ENCODE measurements at regions of chr9 and their contacts with region 1.

Region 1: DNA sequence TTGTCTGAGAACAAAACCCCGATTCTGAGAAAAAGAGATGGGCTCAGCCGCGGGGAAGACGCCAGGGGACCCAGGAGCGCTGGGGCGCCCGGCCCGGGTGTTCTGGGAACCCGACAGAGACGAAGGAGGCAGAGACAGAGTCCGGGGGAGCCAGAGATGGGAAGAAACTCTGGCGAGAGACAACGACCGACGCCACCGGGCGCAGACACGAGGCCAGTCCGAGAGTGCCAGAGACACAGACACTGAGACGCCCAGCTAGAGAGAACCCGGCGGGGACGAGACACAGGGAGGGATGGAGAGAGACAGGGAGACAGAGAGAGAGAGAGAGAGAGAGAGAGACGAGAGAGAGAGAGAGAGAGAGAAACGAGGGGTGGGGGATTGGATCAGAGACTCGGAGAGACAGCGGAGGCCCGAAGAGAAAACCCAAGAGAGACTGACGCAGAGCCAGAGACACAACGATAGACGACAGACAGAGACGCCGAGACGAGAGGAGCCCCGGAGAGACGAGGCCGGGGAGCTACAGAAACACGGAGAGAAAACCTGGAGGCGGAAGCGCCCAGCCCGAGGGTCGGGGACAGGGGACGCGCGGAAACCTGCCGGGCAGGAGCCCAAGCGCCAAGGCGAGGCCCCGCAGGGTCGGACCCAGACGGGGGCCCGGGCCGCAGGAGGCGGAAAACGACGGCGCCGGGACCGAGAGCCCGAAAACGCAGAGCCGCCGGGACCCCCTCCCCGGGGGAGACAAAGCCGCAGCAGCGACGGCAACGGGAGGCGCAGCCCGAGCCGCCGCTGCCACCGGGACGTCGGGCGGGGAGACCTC is 3.3 kb downstream of the NR5A1 start:
- DNase-seq: no peak
- H3K4me3 Mint-ChIP-seq: peak overlapping the region; percentile 70
- H3K27ac Mint-ChIP-seq: no peak overlapping the region
- H3K4me1 Mint-ChIP-seq: peaks cover 13% of the 10 kb centered on the region
- H3K27me3 Mint-ChIP-seq: peaks cover 24% of the 10 kb centered on the region

Region 2: DNA sequence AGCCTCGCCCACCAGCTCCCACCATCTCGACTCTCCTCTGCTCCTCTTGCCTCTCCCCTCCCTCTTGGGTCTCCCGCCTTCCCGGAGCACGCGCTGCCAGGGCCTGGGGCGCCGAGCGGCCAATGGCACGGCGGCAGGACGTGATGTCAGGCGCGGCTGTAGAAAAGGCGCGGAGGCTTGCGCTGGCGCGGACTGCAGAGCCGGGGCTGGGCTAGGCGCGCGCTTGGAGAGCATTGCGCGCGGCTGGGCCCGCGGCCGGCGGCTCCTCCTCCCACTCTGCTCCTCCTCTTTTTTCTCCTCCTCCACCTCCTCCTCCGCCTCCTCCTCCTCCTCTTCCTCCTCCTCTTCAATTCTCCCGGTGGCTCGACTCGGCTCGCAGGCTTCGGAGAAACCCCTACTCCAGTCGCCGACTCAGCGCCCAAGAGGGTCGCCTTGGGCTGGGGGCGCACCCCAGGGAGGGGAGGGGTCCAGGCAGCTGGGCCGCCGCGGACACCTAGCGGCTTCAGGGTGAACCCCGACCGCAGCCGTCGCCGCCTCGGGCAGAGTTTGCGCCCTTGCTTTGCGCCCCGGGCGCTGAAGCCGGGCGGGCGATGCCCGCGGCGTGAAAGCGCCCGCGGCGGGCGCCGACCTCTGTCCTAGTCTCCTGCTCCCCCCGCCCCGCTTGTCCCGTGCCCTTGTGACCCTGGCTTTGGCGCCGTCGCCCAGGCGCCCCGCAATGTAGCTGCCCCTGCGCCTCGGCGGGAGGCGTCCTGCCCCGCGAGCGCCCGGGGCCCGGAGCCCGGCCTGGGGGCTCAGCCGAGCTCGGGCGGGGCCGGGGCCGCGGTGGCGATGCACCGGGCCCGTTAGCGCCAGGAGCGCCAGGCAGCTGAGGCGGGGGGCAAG is 492.3 kb before region 1 on chr9 and contains the start of gene LHX2:
- intact Hi-C with region 1: loop called (anchors 10 kb)
- DNase-seq: peak; percentile 72
- H3K4me3 Mint-ChIP-seq: no peak within 1 kb of the TSS
- H3K27ac Mint-ChIP-seq: peak within 1 kb of the TSS; percentile 78
- H3K4me1 Mint-ChIP-seq: peaks cover 10% of the 10 kb centered on the region
- H3K27me3 Mint-ChIP-seq: peaks cover 64% of the 10 kb centered on the region
- total RNA-seq, gene LHX2: not detected in 2 replicates

Measured in activated CD4-positive, alpha-beta T cell treated with anti-CD3 and anti-CD28 coated beads, Interleukin-2, amount 10 ng/mL, durations not matched to agents 24 days and 14 days (primary cell).